Gastrocnemius medialis (tissue), 4 donors: ENCODE measurements at regions of chr1 and their contacts with region 1.

Region 1: GRCh38 chr1:205227584-205228006 is at the start of gene TMCC2:
- DNase-seq: peak; percentile 70 to 80
- ATAC-seq: peak; percentile 24 to 48
- H3K4me3 ChIP-seq: peak within 1 kb of the TSS; percentile 55 to 71 (median 69)
- H3K27ac ChIP-seq: peak within 1 kb of the TSS; percentile 75 to 91 (median 84)
- H3K4me1 ChIP-seq: peaks cover 36 to 40% of the 10 kb centered on the region in 2 donors
- H3K27me3 ChIP-seq: no peaks in the 10 kb centered on the region
- CTCF ChIP-seq: peak in 1 of 5 experiments; percentile 10
- POLR2A ChIP-seq: peak; percentile 44 to 48
- total RNA-seq, gene TMCC2: 1.1 to 7.6 (median 5.6) TPM

Region 2: GRCh38 chr1:205172729-205173366 is 54.7 kb before region 1 on chr1:
- in situ Hi-C with region 1: no loop called
- intact Hi-C with region 1: loop called (anchors 2 kb)
- DNase-seq: peak in 1 of 2 donors; percentile 24
- ATAC-seq: peak; percentile 84
- H3K4me3 ChIP-seq: no peak overlapping the region
- H3K27ac ChIP-seq: peak overlapping the region; percentile 67 to 92 (median 76)
- H3K4me1 ChIP-seq: peaks cover 32 to 64% of the 10 kb centered on the region in 2 donors
- H3K27me3 ChIP-seq: no peaks in the 10 kb centered on the region
- CTCF ChIP-seq: no peak
- POLR2A ChIP-seq: no peak

Region 3: DNA sequence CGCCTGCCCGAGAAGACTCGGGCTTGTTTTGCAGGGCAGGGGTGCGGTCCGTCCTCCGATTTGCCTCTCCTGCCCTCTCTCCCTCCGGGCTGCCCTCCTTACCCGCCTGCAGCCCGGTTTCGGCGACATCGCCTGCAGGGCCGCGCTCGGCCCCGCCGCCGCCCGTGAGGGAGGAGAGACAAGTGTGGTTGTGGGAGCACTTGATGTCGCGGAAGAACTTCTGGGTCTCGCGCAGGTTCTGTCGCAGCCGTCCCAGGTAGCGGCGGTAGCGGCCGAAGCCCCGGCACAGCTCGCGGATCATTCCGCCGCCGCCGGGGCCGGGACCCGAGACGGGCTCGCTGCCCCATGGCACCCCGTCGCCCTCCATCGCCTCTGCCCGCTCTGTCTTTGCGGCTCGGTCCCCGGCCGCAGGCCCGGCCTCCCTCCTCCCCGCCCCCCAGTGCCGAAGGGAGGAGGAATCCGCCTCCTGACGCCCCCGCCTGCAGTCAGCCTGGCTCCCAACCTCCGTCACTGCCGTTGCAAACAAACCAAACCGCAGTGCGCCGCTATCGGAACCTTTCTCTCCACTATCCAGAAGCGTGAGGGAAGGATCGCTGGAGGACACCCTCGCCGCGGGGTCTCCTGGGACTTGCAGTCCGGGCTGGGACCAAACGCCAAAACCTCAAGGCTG is 16.3 kb before region 1 on chr1 and contains the start of gene DSTYK:
- in situ Hi-C with region 1: no loop called
- intact Hi-C with region 1: loop called (anchors 1 kb)
- DNase-seq: peak; percentile 91 to 92
- ATAC-seq: peak; percentile 96
- H3K4me3 ChIP-seq: peak within 1 kb of the TSS; percentile 67 to 98 (median 91)
- H3K27ac ChIP-seq: peak within 1 kb of the TSS; percentile 87 to 96 (median 92)
- H3K4me1 ChIP-seq: peaks cover 17 to 29% of the 10 kb centered on the region in 2 donors
- H3K27me3 ChIP-seq: no peaks in the 10 kb centered on the region
- CTCF ChIP-seq: no peak
- POLR2A ChIP-seq: peak; percentile 78 to 83
- total RNA-seq, gene DSTYK: 12.2 to 15.8 (median 13.9) TPM

Region 4: GRCh38 chr1:205247130-205247921 is 19.7 kb after region 1 on chr1:
- in situ Hi-C with region 1: no loop called
- intact Hi-C with region 1: loop called (anchors 1 kb)
- DNase-seq: peak; percentile 85 to 90
- ATAC-seq: peak; percentile 77 to 79
- H3K4me3 ChIP-seq: peak overlapping the region in 3 of 4 donors; percentile 4 to 42 (median 19)
- H3K27ac ChIP-seq: peak overlapping the region; percentile 86 to 92 (median 89)
- H3K4me1 ChIP-seq: peaks cover 94 to 96% of the 10 kb centered on the region in 2 donors
- H3K27me3 ChIP-seq: no peaks in the 10 kb centered on the region
- CTCF ChIP-seq: no peak
- POLR2A ChIP-seq: peak; percentile 15 to 52

Region 5: DNA sequence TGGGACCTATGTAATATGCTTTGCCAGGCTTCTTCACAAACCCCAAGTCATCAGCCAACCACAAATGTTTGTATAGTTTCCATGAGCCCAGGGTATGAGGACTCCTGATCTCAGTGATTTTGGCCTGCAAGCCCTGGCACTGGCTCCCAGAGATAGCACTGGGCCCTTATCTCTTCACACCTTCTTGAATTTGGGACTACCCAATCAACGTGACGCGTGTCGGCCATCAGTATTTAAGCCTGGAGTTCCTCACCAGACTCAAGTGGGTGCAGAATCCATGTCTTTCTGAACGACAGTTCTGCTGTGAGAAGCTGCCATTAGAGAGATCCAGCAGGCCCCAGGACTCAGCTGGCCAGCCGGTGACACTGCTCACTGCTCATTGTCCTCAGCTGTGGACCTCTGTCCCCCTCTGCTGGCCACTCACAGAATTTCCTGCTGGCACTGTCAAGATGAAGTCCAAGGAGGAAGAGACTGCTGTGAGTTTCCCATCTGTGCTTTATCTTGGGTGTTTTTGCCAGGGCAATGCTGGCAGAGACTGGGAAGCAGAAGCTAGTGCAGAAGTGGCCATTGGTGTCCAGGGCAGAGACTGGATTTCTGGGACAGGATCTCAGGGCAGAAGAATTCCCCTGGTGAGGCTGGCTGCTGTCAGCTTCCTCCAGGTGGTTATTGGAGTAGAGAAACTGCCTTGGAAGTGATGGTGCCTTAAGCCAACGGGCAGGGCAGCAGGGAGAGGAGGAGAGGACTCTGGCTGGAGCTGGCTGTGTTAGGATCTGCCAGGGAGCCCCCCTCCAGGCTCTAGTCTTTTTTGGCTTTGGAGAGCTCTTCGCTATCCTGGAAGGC is 28.6 kb after region 1 on chr1:
- in situ Hi-C with region 1: no loop called
- intact Hi-C with region 1: loop called (anchors 1 kb)
- DNase-seq: peak; percentile 84 to 93
- ATAC-seq: peak; percentile 71 to 72
- H3K4me3 ChIP-seq: no peak overlapping the region
- H3K27ac ChIP-seq: peak overlapping the region; percentile 49 to 82 (median 74)
- H3K4me1 ChIP-seq: peaks cover 54 to 67% of the 10 kb centered on the region in 2 donors
- H3K27me3 ChIP-seq: no peaks in the 10 kb centered on the region
- CTCF ChIP-seq: peak; percentile 91 to 99 (median 99)
- POLR2A ChIP-seq: no peak

Region 6: DNA sequence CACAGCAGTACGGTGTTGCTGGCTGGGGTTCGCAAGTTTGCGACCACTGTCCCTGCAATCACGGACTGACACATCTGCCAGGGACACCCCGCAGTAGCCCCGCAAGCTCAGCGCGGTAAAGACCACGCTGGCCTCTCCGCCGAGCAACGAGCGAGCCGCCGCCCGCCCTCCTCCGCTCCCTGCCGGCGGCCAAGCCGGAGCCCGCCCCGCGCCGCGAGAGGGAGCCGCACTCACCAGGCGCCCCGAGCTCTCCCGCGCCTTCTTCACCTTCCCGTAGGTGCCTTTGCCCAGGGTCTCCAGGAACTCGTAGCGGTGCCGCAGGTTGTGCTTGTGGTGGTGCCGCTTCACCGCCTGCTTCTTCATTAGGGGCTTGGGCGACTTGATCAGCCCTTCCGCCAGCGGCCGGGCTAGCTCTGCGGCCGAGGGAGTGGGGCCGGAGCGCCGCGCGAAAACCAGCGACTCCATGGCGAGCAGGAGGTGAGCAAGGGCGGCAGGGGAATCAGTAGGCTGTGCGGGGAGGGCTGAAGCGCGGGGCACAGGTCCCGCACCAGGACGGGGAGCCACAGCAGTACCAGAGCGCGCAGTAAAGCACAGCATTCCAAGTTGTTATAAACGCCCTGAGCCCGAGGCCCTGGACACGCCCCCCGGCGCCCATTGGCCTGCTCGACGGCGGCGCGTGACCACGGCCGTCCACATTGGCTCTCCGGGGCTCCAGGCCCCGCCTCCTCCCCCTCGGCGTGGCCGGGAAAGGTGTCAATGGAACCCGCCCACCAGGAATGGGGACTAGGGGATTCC is 93.8 kb after region 1 on chr1 and contains the start of gene NUAK2:
- in situ Hi-C with region 1: no loop called
- intact Hi-C with region 1: loop called (anchors 2 kb)
- DNase-seq: peak; percentile 83 to 89
- ATAC-seq: peak; percentile 76 to 84
- H3K4me3 ChIP-seq: peak within 1 kb of the TSS; percentile 77 to 98 (median 92)
- H3K27ac ChIP-seq: peak within 1 kb of the TSS; percentile 80 to 93 (median 88)
- H3K4me1 ChIP-seq: peaks cover 41 to 45% of the 10 kb centered on the region in 2 donors
- H3K27me3 ChIP-seq: no peaks in the 10 kb centered on the region
- CTCF ChIP-seq: peak in 3 of 5 experiments; percentile 10 to 47 (median 28)
- POLR2A ChIP-seq: peak; percentile 64 to 87
- total RNA-seq, gene NUAK2: 0.42 to 1.9 (median 0.58) TPM